Activated T-helper 2 cell treated with anti-CD3 and anti-CD28 coated beads, Interferon-gamma antibody, Interleukin-2, Interleukin-4, amounts not matched to agents 10 μg/mL and 5 μg/mL and 100 μg/mL, durations not matched to agents 14 hours and 24 hours and 36 hours (primary cell): ENCODE measurements at regions of chr9 and their contacts with region 1.

Region 1: DNA sequence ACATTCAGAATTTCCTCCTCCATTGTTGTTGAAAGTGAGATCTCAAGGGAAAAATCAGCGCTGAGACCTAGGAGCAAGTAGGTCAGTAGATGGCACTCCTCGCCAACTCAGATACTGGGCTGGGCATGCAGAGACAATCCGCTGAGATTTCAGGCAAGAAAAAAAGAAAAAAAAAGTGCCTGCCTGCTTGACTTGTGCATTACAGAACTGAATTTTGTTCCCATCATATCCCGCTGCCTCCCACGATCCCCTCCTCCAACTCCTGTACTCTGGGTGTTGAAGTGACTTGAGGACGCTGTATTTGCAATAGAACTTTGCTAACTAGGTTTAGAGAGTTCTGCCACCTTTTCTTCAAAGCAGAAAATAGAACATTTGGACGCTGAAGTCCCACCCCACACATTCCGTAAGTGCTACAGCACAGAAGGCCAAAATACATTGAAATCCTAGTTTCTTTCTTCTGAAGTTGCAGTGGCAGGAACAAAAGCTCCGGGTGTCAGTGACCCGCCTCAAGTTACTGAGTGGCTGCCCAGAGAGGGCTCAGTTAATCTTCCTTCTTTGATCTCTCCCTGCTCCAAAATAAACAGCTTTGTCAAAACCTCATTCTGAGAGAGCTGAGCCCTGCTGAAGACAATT is 265.8 kb downstream of the MLLT3 start:
- DNase-seq: no peak
- H3K4me3 Mint-ChIP-seq: no peak overlapping the region
- H3K27ac Mint-ChIP-seq: no peak overlapping the region
- H3K4me1 Mint-ChIP-seq: peaks cover 47% of the 10 kb centered on the region
- H3K27me3 Mint-ChIP-seq: no peaks in the 10 kb centered on the region

Region 2: DNA sequence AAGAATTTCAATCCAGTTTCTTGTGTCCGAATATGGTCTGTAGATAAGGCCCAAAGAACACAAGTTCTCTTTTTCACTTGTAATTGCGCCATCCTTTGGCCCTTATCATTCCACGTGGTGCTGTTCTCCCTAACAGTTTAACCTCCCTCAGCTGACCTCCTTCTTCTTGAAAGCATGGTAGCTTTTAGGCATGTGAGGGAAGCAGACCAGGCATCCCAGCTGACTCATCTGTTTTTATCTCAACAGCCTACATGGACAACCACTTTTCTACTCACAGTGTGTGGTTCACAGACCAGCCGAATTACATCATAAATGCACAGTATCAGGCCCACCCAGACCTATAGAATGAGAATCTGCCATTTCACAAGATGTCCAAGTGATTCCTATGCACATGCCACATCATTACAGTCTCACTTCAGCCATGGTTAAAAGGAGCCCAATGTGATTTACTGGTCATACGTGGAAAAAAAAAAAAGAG is 1202.3 kb before region 1 on chr9:
- intact Hi-C with region 1: no loop called
- DNase-seq: no peak
- H3K4me3 Mint-ChIP-seq: no peak overlapping the region
- H3K27ac Mint-ChIP-seq: no peak overlapping the region
- H3K4me1 Mint-ChIP-seq: peaks cover 29% of the 10 kb centered on the region
- H3K27me3 Mint-ChIP-seq: no peaks in the 10 kb centered on the region

Region 3: GRCh38 chr9:19564396-19565061 is 792.0 kb before region 1 on chr9:
- intact Hi-C with region 1: no loop called
- DNase-seq: no peak
- H3K4me3 Mint-ChIP-seq: no peak overlapping the region
- H3K27ac Mint-ChIP-seq: no peak overlapping the region
- H3K4me1 Mint-ChIP-seq: no peaks in the 10 kb centered on the region
- H3K27me3 Mint-ChIP-seq: peaks cover 5% of the 10 kb centered on the region

Region 4: GRCh38 chr9:19925817-19926503 is 430.6 kb before region 1 on chr9:
- intact Hi-C with region 1: loop called (anchors 5 kb)
- DNase-seq: peak; percentile 74
- H3K4me3 Mint-ChIP-seq: peak overlapping the region; percentile 64
- H3K27ac Mint-ChIP-seq: no peak overlapping the region
- H3K4me1 Mint-ChIP-seq: peaks cover 14% of the 10 kb centered on the region
- H3K27me3 Mint-ChIP-seq: peaks cover 24% of the 10 kb centered on the region

Region 5: DNA sequence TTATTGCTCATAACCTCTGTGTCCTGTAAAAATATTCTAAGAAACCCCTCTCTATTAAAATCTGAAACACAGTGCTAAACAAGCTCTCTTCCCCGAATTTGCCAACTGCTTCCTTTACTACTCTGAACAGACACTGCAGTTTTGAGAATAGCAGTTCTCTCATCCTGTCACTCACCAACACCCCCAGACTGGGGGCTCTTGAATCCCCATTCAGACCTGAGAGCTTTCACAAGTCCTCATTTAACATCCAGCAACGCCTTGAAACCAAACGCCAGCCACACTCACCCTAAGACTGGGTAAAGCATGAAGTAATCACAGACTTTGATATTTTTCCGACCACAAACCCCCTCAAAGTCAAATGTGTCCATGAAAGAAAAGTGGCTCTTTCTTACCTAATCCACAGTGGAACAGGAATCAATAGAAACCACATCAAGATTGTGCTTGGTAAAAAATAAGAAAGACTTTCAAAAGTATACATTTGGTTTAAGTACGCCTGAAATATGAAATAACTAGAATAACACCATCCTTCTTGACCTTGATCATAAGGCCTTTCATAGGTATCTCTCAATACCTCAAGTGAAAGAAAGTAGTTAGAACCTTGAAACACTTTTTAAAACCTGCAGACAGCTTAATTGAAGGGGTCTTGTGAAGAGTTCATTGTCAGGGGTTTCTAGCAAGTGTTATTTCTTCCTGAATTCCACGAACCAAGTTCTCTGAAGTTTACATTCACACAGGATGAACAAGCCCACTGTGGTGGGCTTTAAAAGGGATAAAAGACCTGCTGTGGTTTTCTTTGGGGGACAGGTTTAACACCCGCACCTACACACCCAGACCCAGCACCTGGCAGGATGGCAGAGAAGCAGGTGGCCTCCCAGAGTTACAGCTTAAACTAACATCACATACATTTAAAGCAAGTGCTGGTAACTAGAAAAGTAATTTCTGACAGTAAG is 146.9 kb before region 1 on chr9:
- intact Hi-C with region 1: loop called (anchors 1 kb)
- DNase-seq: peak; percentile 46
- H3K4me3 Mint-ChIP-seq: peak overlapping the region; percentile 23
- H3K27ac Mint-ChIP-seq: peak overlapping the region; percentile 84
- H3K4me1 Mint-ChIP-seq: peaks cover 31% of the 10 kb centered on the region
- H3K27me3 Mint-ChIP-seq: no peaks in the 10 kb centered on the region

Region 6: DNA sequence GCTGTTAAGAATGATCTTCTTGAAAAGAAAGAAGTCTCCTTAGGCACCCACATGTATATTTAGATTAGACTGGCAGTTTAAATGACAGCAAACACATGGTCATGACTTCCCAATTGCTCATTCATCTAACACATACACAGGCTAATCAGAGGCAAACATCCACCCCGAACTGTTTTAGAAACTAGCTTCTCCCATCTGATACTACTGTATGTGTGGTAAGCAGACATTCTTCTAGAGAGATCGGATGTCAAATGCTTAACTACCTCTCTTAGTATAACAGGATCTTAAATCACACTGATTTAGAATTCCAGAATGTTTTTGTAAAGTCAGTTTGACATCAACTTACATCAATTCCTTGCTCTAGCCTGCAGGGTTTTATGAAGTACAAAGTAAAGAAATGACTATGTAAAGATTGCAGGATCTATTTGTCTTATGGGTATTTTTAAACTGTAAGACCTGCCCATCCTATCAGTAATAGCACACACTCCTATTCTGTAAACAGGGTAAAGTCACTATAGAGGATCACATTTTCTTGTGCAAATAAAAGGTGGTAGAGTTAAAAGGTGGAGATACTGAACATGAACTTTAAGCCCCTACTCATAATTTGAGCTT is 26.0 kb after region 1 on chr9:
- intact Hi-C with region 1: no loop called
- DNase-seq: no peak
- H3K4me3 Mint-ChIP-seq: no peak overlapping the region
- H3K27ac Mint-ChIP-seq: no peak overlapping the region
- H3K4me1 Mint-ChIP-seq: peaks cover 15% of the 10 kb centered on the region
- H3K27me3 Mint-ChIP-seq: no peaks in the 10 kb centered on the region

Region 7: DNA sequence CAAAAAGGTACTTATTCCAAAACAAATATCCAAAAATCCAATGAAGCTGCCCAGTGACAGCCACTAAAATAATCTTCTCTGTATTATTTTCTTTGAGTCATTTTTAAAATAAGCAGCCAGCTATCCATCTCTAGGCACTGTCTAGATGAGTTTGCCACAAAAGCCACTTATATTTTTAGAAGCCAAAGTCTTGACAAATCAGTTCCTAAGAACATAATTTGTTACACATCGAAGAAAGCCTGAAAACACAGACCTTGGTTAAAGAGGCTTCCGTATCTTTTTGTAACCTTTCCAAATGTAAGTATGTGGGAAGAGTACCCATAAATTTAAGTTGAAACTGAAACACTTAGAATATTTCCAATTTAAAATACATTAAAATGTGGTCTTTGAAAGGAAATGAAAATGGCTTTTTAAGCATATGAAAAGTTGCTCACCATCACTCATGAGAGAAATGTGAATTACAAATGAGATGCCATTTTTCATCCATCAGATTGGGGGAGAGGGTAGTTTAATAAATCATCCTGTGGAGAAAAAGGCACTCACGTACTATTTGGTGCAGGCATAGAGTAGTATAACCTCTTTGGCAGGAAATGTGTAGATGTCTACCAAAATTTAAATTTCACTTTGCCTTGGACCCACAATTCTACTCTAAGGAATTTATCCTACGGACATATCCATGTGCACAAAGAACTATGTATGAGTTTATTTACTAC is 85.3 kb after region 1 on chr9:
- intact Hi-C with region 1: loop called (anchors 5 kb)
- DNase-seq: no peak
- H3K4me3 Mint-ChIP-seq: no peak overlapping the region
- H3K27ac Mint-ChIP-seq: peak overlapping the region; percentile 24
- H3K4me1 Mint-ChIP-seq: peaks cover 36% of the 10 kb centered on the region
- H3K27me3 Mint-ChIP-seq: no peaks in the 10 kb centered on the region

Region 8: GRCh38 chr9:20558566-20559016 is 202.1 kb after region 1 on chr9:
- intact Hi-C with region 1: loop called (anchors 2 kb)
- DNase-seq: no peak
- H3K4me3 Mint-ChIP-seq: no peak overlapping the region
- H3K27ac Mint-ChIP-seq: peak overlapping the region; percentile 54
- H3K4me1 Mint-ChIP-seq: peaks cover 72% of the 10 kb centered on the region
- H3K27me3 Mint-ChIP-seq: no peaks in the 10 kb centered on the region

Region 9: DNA sequence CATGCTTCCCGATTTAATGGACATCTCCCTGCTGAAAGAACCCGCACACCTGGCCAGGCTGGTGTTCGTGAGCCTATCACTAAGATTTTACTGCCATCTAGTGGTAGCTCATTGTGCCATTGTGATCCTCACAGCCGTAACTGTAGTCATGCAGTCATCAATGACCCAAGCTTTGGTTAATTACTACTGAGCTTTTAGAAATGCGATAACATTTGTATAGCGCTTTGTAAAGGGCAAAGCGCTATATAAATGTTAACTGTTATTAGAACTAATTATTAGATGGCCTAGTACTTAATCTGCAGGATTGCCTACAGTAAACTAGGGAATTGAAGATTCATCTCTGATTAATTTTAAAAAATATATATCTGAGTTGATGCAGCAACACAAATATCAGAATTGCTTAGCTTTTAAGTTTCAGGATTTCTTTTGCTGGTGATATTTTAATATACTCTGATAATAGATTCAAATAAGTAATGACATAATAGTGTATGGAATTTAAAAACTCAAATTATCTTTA is 584.7 kb after region 1 on chr9:
- intact Hi-C with region 1: loop called (anchors 1 kb)
- DNase-seq: peak; percentile 40
- H3K4me3 Mint-ChIP-seq: no peak overlapping the region
- H3K27ac Mint-ChIP-seq: no peak overlapping the region
- H3K4me1 Mint-ChIP-seq: peaks cover 3% of the 10 kb centered on the region
- H3K27me3 Mint-ChIP-seq: no peaks in the 10 kb centered on the region